ENCODE measurements at regions of chr5 and their contacts with region 1.

Region 1: GRCh38 chr5:160342403-160342941 is 28.0 kb downstream of the C1QTNF2 start:
- DNase-seq: no peak
- H3K4me3 ChIP-seq: no peak overlapping the region
- H3K27ac ChIP-seq: no peak overlapping the region
- H3K4me1 ChIP-seq: peaks cover 0 to 8% (median 0%) of the 10 kb centered on the region in 4 donors
- H3K27me3 ChIP-seq: no peaks in the 10 kb centered on the region
- CTCF ChIP-seq: no peak
- EP300 ChIP-seq: no peak
- POLR2A ChIP-seq: no peak

Region 2: DNA sequence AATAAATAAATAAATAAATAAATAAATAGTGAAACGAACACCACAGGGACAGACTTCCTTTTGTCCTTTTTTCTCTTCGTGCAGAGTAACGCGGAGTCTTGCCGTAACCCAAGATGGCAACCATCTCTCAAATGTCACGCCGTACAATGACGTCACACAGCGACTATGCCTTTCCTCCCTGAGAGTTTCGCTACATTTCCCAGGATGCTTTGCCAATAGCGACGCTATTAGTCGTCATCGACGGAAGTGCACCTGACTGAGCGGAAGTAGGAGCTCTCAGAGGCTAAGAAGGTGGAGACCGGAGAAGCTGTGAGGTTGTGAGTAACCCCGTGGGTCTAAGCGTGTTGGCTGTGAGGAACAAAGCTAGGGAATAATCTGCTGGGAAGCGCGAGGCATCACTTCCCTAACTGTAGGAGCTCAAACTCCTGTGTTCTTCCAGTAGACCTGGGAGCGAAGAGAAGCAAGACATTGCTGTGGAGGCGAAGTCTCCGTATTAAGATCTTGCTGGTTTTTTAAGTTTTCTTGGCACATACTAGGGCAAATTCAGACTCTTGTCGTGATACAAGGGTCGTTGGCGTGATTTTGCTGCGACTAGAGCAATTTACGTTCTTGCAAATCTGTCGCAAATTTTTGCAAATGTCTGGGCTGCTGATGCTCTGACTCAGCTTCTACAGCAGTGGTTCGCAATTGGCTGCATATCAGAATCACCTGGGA is 333.4 kb before region 1 on chr5 and contains the start of gene TTC1:
- in situ Hi-C with region 1: loop called in 1 of 4 experiments (anchors 25 kb)
- intact Hi-C with region 1: no loop called
- DNase-seq: peak; percentile 97
- H3K4me3 ChIP-seq: peak within 1 kb of the TSS; percentile 71 to 89 (median 79)
- H3K27ac ChIP-seq: peak within 1 kb of the TSS; percentile 89 to 95 (median 92)
- H3K4me1 ChIP-seq: peaks cover 15 to 43% (median 36%) of the 10 kb centered on the region in 4 donors
- H3K27me3 ChIP-seq: no peaks in the 10 kb centered on the region
- CTCF ChIP-seq: no peak
- EP300 ChIP-seq: peak; percentile 37
- POLR2A ChIP-seq: peak; percentile 95
- total RNA-seq, gene TTC1: 5.8 to 42.2 (median 24.8) TPM

Region 3: DNA sequence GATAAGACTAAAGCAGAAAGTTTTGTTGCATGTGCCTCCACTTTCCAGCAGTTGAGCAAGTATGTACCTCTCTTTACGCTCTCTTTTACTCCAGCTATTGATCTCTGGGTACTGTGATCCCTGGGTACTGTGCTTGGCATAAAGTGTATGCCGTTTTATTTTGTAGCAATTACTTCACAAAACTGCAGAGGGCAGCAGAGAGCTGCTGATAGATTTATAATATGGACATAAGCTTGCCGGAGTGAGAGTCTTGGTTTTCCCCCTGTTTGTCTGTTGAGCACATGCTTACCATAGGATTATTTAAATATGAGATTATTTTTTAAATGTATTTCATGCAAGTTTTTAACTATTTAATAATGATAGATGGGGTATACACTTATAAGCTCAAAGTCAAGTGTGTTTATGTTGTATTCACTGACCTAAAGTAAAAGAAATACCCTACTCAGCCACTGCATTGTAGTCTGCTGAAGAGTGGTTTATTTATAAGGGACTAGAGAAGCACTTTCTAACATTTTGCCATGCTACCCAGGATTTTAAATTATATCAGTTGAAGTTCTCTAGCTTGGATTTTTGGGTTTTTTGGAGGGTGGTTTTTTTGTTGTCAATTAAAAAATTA is 320.5 kb before region 1 on chr5:
- in situ Hi-C with region 1: loop called (anchors 5 to 25 kb)
- intact Hi-C with region 1: loop called (anchors 5 kb)
- DNase-seq: peak; percentile 62
- H3K4me3 ChIP-seq: no peak overlapping the region
- H3K27ac ChIP-seq: peak overlapping the region in 2 of 4 donors; percentile 8 to 21
- H3K4me1 ChIP-seq: peaks cover 0 to 26% (median 11%) of the 10 kb centered on the region in 4 donors
- H3K27me3 ChIP-seq: no peaks in the 10 kb centered on the region
- CTCF ChIP-seq: peak; percentile 73 to 91 (median 82)
- EP300 ChIP-seq: no peak
- POLR2A ChIP-seq: no peak

Region 4: GRCh38 chr5:160199410-160199911 is 143.0 kb before region 1 on chr5:
- in situ Hi-C with region 1: loop called (anchors 5 to 10 kb)
- intact Hi-C with region 1: loop called (anchors 5 kb)
- DNase-seq: peak; percentile 74
- H3K4me3 ChIP-seq: peak overlapping the region; percentile 18 to 45 (median 20)
- H3K27ac ChIP-seq: peak overlapping the region in 1 of 4 donors; percentile 1
- H3K4me1 ChIP-seq: peaks cover 4 to 9% (median 6%) of the 10 kb centered on the region in 4 donors
- H3K27me3 ChIP-seq: no peaks in the 10 kb centered on the region
- CTCF ChIP-seq: peak; percentile 59 to 95 (median 92)
- EP300 ChIP-seq: no peak
- POLR2A ChIP-seq: no peak

Region 5: DNA sequence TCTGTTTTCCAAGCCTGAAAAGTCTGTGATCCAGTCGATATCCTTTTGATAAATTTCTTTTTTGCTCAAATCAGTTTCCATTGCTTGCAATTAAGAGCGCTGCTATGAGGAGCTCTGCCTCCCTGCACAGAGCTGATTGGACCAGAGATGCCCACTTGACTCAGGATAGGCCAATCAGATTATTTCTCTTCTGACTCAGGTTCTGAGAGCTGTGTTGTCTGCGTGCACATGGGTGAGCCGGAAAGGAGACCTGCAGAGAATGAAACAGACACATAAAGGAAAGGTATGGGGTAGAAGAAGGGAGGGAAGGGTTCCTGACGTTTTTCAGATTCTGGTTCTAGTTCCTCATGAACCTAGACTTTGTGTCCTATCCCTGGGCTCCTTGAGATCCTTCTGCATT is 128.9 kb before region 1 on chr5:
- in situ Hi-C with region 1: loop called in 1 of 4 experiments (anchors 10 kb)
- intact Hi-C with region 1: no loop called
- DNase-seq: no peak
- H3K4me3 ChIP-seq: no peak overlapping the region
- H3K27ac ChIP-seq: no peak overlapping the region
- H3K4me1 ChIP-seq: no peaks in the 10 kb centered on the region
- H3K27me3 ChIP-seq: no peaks in the 10 kb centered on the region
- CTCF ChIP-seq: no peak
- EP300 ChIP-seq: no peak
- POLR2A ChIP-seq: no peak